ENCODE measurements at regions of chr3 and their contacts with region 1.

Region 1: DNA sequence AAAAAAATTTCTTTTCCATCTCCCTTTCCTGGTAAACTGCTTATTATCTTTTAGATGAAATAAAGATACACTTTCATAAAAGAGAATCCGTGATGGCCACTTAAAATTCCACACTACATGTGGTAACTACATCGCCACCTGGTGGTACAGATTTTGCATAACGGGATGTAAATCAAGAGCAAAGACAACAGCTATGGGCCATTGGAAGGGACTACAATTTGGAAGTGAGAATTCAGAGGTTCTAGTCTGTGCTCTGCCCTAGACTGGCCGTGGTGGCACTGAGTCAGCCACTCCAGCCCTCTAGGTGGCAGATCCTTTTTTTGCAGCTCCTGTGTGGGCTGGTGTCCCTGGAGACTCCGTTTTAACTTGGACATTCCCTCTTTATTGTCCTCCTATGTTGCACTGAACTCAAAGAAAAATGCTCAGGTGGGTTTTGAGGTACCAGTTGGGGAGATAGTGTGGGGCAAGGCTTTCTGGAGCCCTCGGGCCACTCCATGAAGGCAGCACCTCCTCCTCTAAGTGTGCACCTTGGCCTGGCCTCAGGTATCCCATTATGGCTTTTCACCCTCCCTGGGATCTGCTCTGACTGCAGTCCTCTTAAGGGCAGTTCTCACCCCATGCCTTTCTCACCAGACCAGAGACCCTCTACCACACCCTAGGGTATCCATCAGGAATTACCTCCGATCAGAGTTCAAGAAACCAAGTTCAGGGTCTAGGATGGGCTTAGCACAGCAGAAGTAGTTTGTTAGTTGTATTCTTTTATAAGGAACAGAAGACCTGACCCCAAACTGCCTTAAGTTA is 54.9 kb downstream of the SPSB4 start:
- DNase-seq: peak; percentile 76 to 79
- H3K4me3 ChIP-seq: no peak overlapping the region
- H3K27ac ChIP-seq: no peak overlapping the region
- H3K4me1 ChIP-seq: no peaks in the 10 kb centered on the region
- H3K27me3 ChIP-seq: no peaks in the 10 kb centered on the region
- CTCF ChIP-seq: peak; percentile 22 to 75 (median 65)
- POLR2A ChIP-seq: no peak

Region 2: DNA sequence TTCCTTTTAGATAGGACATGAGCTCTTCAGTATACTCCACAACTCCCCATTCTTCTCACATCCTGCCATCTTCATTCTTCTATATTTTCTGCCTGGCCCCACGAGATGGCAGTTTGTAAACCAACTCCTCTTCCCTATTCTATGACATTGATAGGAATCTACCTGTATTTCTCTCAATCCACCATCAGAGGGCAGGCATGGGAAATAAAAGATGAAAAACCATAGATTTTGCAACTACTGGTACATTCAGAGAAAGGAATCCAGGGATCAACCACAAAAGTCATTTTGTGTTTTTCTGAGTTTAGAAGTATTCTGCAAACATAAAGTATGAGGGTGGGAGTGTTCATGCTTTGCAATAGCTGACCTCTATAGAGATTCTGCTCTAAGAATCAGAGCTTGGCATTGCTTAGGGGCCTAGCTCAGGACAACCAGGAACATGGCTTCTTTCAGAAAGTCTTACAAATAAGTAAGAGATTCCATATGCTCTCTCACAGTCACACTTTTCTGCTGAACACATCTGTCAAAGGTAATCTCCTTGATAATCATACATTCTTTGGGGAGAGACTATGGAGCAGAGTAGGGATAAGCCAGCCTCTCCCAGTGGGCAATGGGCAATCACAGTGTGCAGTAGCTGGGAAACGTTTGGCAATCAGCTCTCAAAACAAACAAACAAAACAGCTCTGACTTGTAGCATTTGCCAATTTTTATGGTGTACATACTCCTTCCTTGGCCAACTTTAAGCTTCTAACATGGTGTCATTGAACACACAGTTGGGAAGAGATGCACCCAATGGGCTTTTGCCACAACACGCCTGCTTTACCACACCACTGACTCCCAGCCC is 207.5 kb before region 1 on chr3:
- intact Hi-C with region 1: loop called (anchors 5 kb)
- DNase-seq: no peak
- H3K4me3 ChIP-seq: no peak overlapping the region
- H3K27ac ChIP-seq: no peak overlapping the region
- H3K4me1 ChIP-seq: no peaks in the 10 kb centered on the region
- H3K27me3 ChIP-seq: no peaks in the 10 kb centered on the region
- CTCF ChIP-seq: peak in 5 of 6 experiments; percentile 11 to 75 (median 61)
- POLR2A ChIP-seq: no peak

Region 3: GRCh38 chr3:141000027-141000663 is 105.9 kb before region 1 on chr3:
- intact Hi-C with region 1: loop called (anchors 10 kb)
- DNase-seq: peak; percentile 58 to 59
- H3K4me3 ChIP-seq: no peak overlapping the region
- H3K27ac ChIP-seq: no peak overlapping the region
- H3K4me1 ChIP-seq: no peaks in the 10 kb centered on the region
- H3K27me3 ChIP-seq: no peaks in the 10 kb centered on the region
- CTCF ChIP-seq: peak in 4 of 6 experiments; percentile 16 to 62 (median 49)
- POLR2A ChIP-seq: no peak

Region 4: GRCh38 chr3:141498598-141499223 is 392.7 kb after region 1 on chr3:
- intact Hi-C with region 1: no loop called
- DNase-seq: peak in 1 of 2 donors; percentile 19
- H3K4me3 ChIP-seq: no peak overlapping the region
- H3K27ac ChIP-seq: no peak overlapping the region
- H3K4me1 ChIP-seq: no peaks in the 10 kb centered on the region
- H3K27me3 ChIP-seq: no peaks in the 10 kb centered on the region
- CTCF ChIP-seq: no peak
- POLR2A ChIP-seq: no peak

Measured in thyroid gland (tissue), 4 donors.